K562 (cell line): ENCODE measurements at regions of chr6 and their contacts with region 1.

Region 1: DNA sequence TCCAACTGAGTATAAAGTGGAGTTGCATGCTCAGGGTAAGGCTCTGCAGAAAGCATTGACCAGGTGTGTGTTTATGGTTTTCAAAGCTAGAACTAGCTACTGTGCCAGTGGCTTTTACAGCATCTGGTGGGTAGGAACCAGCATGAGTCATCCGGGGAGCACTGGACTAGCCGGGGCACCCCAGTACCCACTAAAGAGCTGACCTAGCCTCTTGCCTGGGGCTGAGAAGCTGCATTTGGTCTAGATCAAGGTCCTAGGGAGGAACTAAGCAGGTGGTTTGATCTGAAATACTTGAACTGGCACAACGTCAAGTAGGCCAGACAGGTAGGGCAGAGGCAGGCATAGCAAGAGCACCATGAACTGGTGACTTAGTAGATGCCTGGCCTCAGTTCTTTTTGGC is 109.8 kb upstream of the PTPRK start:
- DNase-seq: no peak
- ATAC-seq: no peak
- H3K4me3 ChIP-seq: no peak overlapping the region
- H3K27ac ChIP-seq: no peak overlapping the region
- H3K4me1 ChIP-seq: no peaks in the 10 kb centered on the region
- H3K27me3 ChIP-seq: no peaks in the 10 kb centered on the region
- CTCF ChIP-seq: no peak
- EP300 ChIP-seq: no peak
- POLR2A ChIP-seq: no peak
- RAD21 ChIP-seq: no peak

Region 2: GRCh38 chr6:128567029-128567428 is 63.2 kb before region 1 on chr6:
- CTCF ChIA-PET with region 1: interaction called, 10 read pairs
- POLR2A ChIA-PET with region 1: no interaction called
- in situ Hi-C with region 1: no loop called
- intact Hi-C with region 1: no loop called
- DNase-seq: no peak
- ATAC-seq: no peak
- H3K4me3 ChIP-seq: no peak overlapping the region
- H3K27ac ChIP-seq: no peak overlapping the region
- H3K4me1 ChIP-seq: no peaks in the 10 kb centered on the region
- H3K27me3 ChIP-seq: no peaks in the 10 kb centered on the region
- CTCF ChIP-seq: no peak
- EP300 ChIP-seq: no peak
- POLR2A ChIP-seq: no peak
- RAD21 ChIP-seq: no peak